ENCODE measurements at regions of chr6 and their contacts with region 1.

Region 1: DNA sequence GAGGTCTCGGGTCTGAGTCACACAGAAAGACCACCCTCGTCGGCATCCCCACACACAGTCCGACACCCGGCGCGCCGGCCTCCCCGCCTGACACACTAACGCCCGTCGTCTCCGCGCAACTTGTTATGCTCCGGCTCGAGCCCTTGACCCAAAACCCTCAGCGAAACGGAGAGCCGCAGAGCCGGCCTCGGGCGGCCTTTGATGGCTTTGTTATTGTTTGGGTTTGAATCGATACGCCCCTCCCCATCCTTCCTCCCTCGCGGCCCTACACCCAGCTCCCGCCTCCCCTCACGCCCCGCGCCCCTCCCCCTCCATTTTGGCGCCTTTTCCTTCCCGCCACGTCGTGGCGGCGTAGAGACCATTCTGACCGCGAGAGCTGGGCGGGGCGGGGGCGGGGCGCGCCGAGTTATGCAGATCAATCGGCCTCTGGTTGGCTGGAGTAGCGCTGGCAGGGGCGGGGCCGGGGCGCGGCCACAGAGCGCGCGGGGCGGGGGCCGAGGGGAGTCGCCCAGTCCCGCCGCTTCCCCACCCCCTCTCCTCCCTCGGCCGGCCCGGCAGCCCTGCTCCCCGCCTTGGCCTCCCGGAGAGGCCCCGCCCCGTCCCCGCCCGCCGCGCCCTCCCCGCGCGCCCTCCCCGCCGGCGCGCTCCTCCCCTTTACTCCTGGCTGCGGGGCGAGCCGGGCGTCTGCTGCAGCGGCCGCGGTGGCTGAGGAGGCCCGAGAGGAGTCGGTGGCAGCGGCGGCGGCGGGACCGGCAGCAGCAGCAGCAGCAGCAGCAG is at the start of gene PIM1:
- DNase-seq: peak; percentile 100
- H3K4me3 Mint-ChIP-seq: peak within 1 kb of the TSS; percentile 93
- H3K27ac Mint-ChIP-seq: peak within 1 kb of the TSS; percentile 96
- H3K4me1 Mint-ChIP-seq: peaks cover 34% of the 10 kb centered on the region
- H3K27me3 Mint-ChIP-seq: no peaks in the 10 kb centered on the region
- total RNA-seq, gene PIM1: 226 to 227 TPM

Region 2: GRCh38 chr6:36912586-36912985 is 257.1 kb before region 1 on chr6:
- CTCF ChIA-PET with region 1: no interaction called
- intact Hi-C with region 1: loop called (anchors 5 kb)
- DNase-seq: peak; percentile 72
- H3K4me3 Mint-ChIP-seq: peak overlapping the region; percentile 5
- H3K27ac Mint-ChIP-seq: peak overlapping the region; percentile 71
- H3K4me1 Mint-ChIP-seq: peaks cover 40% of the 10 kb centered on the region
- H3K27me3 Mint-ChIP-seq: no peaks in the 10 kb centered on the region

Region 3: DNA sequence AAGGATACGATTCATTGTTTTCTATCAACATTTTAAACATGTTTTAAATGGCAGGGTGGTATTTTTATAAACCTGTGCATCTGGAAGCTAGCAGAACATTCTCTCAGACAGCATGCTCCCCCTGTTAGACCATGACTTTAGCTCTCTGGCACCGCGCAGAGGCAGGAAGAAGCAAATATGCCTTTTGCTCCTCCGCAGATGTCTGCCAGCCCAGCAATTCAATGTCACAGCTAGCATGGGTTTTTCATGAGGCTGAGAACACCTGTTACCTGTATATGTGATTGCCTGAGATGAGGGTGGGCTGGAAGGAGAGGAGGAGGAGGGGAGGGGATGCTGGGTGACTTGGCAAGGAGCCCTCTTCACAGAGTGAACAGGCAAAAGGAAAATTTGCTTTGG is 190.3 kb before region 1 on chr6:
- CTCF ChIA-PET with region 1: no interaction called
- intact Hi-C with region 1: no loop called
- DNase-seq: peak; percentile 50
- H3K4me3 Mint-ChIP-seq: no peak overlapping the region
- H3K27ac Mint-ChIP-seq: peak overlapping the region; percentile 38
- H3K4me1 Mint-ChIP-seq: peaks cover 24% of the 10 kb centered on the region
- H3K27me3 Mint-ChIP-seq: no peaks in the 10 kb centered on the region

Region 4: DNA sequence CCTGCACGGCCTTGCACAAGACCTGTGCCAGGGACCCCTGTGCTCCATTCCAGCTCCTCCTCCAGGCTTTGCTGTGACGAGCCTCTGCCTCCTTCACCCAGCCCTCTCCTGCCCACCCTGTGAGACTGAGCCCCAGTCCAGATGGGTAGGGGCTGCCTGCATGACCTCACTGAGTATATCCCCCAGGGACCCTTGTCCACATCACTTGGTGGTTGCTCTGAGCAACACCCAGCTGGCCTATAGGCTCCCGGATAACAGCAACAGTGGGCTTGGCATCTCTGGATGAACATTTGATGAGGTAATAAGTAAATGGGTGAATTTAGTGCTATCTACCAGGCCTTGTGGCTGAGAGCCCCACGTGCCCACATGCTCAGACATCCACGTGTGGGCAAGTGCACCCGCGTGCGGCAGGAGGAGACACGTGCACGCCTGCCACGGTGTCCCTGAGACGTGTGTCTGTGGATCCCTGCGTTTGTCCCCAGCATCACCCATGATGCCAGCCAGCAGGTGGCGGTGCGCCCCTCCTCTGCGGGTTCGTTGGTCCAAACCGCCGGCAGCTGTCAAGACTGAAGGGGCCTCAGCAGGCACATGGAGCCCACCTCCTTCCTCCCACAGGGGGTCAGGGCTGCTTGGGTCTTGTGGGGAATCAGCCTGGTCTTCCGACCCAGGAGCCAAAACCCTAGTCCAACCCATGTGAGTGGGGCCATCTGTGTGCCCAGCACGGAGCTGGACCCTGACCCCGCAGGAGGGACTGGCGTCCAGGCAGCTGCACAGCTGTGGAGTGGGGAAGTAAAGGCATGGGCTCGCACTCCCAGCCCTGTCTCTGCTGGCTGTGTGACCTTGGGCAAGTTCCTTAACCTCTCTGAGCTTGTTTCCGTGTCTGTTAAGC is 118.3 kb before region 1 on chr6:
- CTCF ChIA-PET with region 1: interaction called, 186 read pairs
- intact Hi-C with region 1: loop called (anchors 1 kb)
- DNase-seq: peak; percentile 96
- H3K4me3 Mint-ChIP-seq: peak overlapping the region; percentile 86
- H3K27ac Mint-ChIP-seq: peak overlapping the region; percentile 99
- H3K4me1 Mint-ChIP-seq: peaks cover 56% of the 10 kb centered on the region
- H3K27me3 Mint-ChIP-seq: no peaks in the 10 kb centered on the region

Region 5: DNA sequence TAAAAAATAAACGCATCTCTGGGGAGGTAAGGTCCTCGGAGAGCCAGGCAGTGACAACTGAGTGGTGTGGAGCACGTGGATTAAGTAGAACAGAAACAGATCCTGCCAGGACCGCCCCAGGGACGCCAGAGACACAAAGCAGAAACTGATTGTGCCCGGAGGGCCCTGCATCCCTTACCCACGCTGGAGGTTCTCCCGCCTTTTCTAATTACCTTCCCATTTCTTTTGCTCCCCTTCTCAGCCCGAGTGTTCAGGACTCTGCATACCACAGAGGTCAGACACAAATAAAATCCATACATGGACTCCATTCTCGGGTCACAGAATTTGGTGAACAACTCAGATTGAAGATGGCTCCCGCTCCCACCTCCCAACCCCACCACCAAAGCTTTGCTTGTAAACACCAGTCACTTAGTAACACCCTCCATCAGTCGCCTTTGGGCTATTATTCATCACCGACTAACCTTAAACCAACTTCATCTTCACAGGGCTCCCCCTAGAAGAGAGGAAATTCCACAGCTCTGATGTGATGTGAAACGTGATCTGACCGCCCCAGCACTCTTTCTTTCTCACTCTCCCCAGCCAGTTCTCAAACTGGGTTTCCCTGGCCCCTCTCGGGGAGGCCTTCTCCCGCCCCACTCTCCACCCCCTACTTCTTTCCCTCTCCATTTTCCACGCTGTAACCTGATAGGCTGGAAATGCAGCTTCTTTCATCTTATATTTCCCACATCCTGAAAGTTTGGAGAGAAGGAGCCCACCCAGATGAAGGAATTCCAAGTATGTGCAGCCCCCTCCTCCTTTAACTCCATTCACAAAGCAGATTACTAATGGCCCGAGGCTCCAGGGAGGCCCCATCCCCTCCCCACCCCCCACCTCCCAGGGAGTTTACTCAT is 32.2 kb before region 1 on chr6:
- CTCF ChIA-PET with region 1: no interaction called
- intact Hi-C with region 1: loop called (anchors 1 kb)
- DNase-seq: peak; percentile 72
- H3K4me3 Mint-ChIP-seq: no peak overlapping the region
- H3K27ac Mint-ChIP-seq: peak overlapping the region; percentile 74
- H3K4me1 Mint-ChIP-seq: peaks cover 39% of the 10 kb centered on the region
- H3K27me3 Mint-ChIP-seq: no peaks in the 10 kb centered on the region

Region 6: GRCh38 chr6:37190159-37190535 is 20.5 kb after region 1 on chr6:
- CTCF ChIA-PET with region 1: interaction called, 8 read pairs
- intact Hi-C with region 1: loop called (anchors 1 kb)
- DNase-seq: peak; percentile 68
- H3K4me3 Mint-ChIP-seq: no peak overlapping the region
- H3K27ac Mint-ChIP-seq: peak overlapping the region; percentile 82
- H3K4me1 Mint-ChIP-seq: peaks cover 77% of the 10 kb centered on the region
- H3K27me3 Mint-ChIP-seq: no peaks in the 10 kb centered on the region

Region 7: DNA sequence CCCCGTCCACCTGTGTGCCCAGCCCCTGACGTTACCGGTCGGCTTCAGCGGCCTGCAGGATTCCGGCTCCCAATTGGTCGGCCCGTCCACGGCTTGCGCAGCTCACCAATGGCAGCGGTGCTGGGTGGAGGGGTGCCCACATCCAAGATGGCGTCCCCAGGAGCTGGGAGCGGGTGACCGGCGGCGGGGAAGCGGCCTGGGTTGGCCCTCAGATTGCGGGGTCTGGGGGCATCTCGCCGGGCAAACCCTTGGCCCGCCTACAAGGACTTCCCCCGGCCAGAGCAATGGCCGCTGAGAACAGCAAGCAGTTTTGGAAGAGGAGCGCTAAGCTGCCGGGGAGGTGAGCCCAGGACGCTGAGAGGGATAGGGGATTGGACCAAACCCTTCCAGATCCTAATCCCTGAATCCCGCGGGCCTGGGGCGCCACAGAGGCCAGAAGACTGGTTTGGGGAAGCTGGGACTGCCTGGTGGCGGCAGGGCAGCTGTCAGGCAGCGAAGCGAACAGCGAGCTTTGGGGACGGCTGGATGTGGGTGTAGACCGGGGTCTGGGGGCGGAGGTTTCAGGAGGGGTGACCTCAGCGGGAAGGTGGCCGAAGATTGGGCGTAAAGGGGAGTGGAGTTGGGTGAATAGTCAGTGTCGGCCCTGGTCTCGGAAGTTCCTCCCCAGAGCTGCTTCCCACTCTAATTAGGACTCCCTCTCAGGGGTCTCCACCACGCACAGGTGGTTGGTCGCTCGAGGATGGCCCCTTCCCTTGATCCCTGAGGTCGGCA is 88.1 kb after region 1 on chr6 and contains the starts of genes TBC1D22B and TMEM217:
- CTCF ChIA-PET with region 1: no interaction called
- intact Hi-C with region 1: loop called (anchors 1 kb)
- DNase-seq: peak; percentile 99
- H3K4me3 Mint-ChIP-seq: peak within 1 kb of the TSS; percentile 80
- H3K27ac Mint-ChIP-seq: peak within 1 kb of the TSS; percentile 87
- H3K4me1 Mint-ChIP-seq: peaks cover 46% of the 10 kb centered on the region
- H3K27me3 Mint-ChIP-seq: no peaks in the 10 kb centered on the region
- total RNA-seq, gene TBC1D22B: 13.4 to 15.1 TPM
- total RNA-seq, gene TMEM217: 0.81 to 0.95 TPM

Measured in activated naive CD4-positive, alpha-beta T cell treated with anti-CD3 and anti-CD28 coated beads for 36 hours (primary cell).